Activated naive CD4-positive, alpha-beta T cell treated with anti-CD3 and anti-CD28 coated beads for 36 hours (primary cell): ENCODE measurements at regions of chr1 and their contacts with region 1.

Region 1: DNA sequence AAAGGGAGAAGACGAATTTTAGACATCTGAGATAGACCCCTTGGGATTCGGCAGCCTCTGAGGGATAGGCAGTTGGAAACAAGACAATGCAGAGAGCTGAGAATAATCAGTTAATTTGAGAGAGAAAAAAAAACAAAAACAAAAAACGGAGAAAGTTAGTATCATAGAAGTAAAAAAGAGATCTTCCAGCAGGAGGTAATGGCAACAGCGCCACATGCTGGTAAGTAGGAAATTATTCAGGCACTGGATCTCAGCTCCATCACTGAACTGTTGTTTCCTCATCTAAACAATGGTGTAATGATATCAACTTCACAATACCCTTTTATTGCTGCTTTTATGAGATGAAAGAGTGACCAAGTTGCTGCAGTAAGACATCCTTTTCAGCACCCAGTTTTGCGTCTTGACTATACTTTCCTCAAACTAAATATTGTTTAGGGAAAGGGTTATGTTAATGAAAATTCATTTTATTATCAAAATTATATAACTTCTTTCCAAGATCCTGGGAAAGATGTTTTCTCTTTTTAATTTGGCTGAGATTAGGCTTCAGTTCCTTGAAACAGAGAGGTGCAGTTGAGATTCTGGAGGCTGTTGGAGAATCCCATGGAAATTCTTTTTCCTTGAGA is 91.4 kb upstream of the KCNA3 start:
- DNase-seq: peak; percentile 75
- H3K4me3 Mint-ChIP-seq: no peak overlapping the region
- H3K27ac Mint-ChIP-seq: no peak overlapping the region
- H3K4me1 Mint-ChIP-seq: peaks cover 2% of the 10 kb centered on the region
- H3K27me3 Mint-ChIP-seq: peaks cover 2% of the 10 kb centered on the region

Region 2: GRCh38 chr1:110554871-110555801 is 211.0 kb before region 1 on chr1:
- CTCF ChIA-PET with region 1: interaction called, 10 read pairs
- intact Hi-C with region 1: no loop called
- DNase-seq: peak; percentile 55
- H3K4me3 Mint-ChIP-seq: peak overlapping the region; percentile 22
- H3K27ac Mint-ChIP-seq: no peak overlapping the region
- H3K4me1 Mint-ChIP-seq: peaks cover 3% of the 10 kb centered on the region
- H3K27me3 Mint-ChIP-seq: peaks cover 41% of the 10 kb centered on the region

Region 3: GRCh38 chr1:110565565-110565964 is 200.6 kb before region 1 on chr1:
- CTCF ChIA-PET with region 1: no interaction called
- intact Hi-C with region 1: no loop called
- DNase-seq: no peak
- H3K4me3 Mint-ChIP-seq: no peak overlapping the region
- H3K27ac Mint-ChIP-seq: no peak overlapping the region
- H3K4me1 Mint-ChIP-seq: no peaks in the 10 kb centered on the region
- H3K27me3 Mint-ChIP-seq: peaks cover 12% of the 10 kb centered on the region

Region 4: GRCh38 chr1:110645821-110646735 is 120.1 kb before region 1 on chr1:
- CTCF ChIA-PET with region 1: interaction called, 37 read pairs
- intact Hi-C with region 1: no loop called
- DNase-seq: no peak
- H3K4me3 Mint-ChIP-seq: peak overlapping the region; percentile 28
- H3K27ac Mint-ChIP-seq: no peak overlapping the region
- H3K4me1 Mint-ChIP-seq: peaks cover 55% of the 10 kb centered on the region
- H3K27me3 Mint-ChIP-seq: no peaks in the 10 kb centered on the region

Region 5: DNA sequence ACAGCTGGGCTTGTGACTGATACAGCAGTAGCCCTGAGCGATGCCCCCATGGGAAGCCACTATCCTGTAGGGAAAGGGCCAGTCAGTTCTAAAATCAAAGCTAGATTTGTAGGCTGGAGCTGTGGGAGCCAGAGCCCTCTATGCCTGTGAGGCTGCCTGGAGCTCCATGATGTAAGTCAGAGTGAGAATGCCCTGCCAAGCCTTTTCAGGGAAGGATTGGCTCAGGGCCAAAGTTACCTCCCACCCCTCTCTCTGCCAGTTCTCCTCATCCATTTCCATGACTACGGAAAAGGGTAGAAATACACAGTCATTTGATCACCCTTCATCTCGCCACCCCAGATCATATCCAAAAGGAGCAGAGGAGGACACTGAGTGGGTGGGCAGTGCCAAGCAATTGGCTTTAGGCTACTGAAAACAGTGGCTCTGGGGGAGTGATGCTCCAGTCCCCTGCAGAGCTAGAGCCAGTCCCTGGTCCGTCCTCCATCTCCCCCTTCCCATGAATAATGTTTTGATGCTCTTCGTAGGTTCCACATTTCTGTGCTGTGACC is 31.9 kb before region 1 on chr1:
- CTCF ChIA-PET with region 1: interaction called, 12 read pairs
- intact Hi-C with region 1: no loop called
- DNase-seq: no peak
- H3K4me3 Mint-ChIP-seq: no peak overlapping the region
- H3K27ac Mint-ChIP-seq: no peak overlapping the region
- H3K4me1 Mint-ChIP-seq: no peaks in the 10 kb centered on the region
- H3K27me3 Mint-ChIP-seq: no peaks in the 10 kb centered on the region

Region 6: GRCh38 chr1:110787328-110788071 is 21.4 kb after region 1 on chr1:
- CTCF ChIA-PET with region 1: interaction called, 103 read pairs
- intact Hi-C with region 1: no loop called
- DNase-seq: peak; percentile 25
- H3K4me3 Mint-ChIP-seq: no peak overlapping the region
- H3K27ac Mint-ChIP-seq: peak overlapping the region; percentile 82
- H3K4me1 Mint-ChIP-seq: peaks cover 42% of the 10 kb centered on the region
- H3K27me3 Mint-ChIP-seq: no peaks in the 10 kb centered on the region

Region 7: DNA sequence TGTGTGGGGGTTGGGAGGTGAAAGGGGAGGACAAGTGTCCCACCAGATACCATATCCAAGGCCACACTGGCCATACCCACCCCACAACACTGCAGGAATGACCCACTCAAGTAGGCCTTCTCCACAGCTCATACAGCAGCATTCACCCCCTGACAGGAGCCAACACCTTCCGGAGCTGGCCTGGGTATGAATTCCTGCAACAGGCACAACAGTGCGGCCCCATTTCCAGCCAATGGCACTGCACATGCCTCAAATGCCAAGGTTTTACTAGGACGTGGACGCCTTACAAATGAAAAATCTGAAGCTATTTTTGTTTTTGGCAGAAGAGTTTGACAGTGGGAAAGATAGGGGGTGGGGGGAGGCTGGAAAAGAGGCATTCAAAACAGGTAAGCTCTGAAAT is 1221.4 kb after region 1 on chr1:
- CTCF ChIA-PET with region 1: no interaction called
- intact Hi-C with region 1: no loop called
- DNase-seq: no peak
- H3K4me3 Mint-ChIP-seq: no peak overlapping the region
- H3K27ac Mint-ChIP-seq: no peak overlapping the region
- H3K4me1 Mint-ChIP-seq: peaks cover 19% of the 10 kb centered on the region
- H3K27me3 Mint-ChIP-seq: peaks cover 40% of the 10 kb centered on the region